ENCODE measurements at regions of chr9 and their contacts with region 1.

Region 1: GRCh38 chr9:75866273-75866871 is 24.1 kb upstream of the PCSK5 start:
- DNase-seq: peak in 3 of 10 donors; percentile 10 to 50 (median 14)

Region 2: GRCh38 chr9:75200892-75201470 is 665.4 kb before region 1 on chr9:
- intact Hi-C with region 1: loop called (anchors 10 kb)
- DNase-seq: no peak

Region 3: DNA sequence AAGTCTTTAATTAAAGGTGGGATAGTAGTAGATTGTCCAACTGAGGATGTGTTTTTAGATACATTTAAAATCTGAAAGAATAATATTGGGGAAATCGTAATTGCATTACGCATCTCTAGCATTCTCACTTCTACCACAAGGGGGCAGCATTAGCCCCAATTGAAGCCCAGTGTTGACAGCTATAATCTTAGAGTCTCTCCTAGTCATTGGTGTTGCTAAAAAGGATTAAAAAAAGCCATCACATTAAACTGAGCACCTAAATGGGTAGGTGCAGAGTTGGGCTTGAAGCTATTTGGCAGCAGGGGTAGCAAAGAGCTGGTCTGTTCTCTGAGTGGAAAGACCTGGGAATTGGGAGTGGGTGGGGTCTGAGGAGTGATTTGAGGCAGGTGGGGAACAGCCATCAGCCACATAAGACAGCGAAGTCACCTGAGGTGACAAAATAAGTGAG is 600.8 kb before region 1 on chr9:
- intact Hi-C with region 1: loop called (anchors 5 kb)
- DNase-seq: peak in 5 of 10 donors; percentile 12 to 49 (median 32)

Region 4: DNA sequence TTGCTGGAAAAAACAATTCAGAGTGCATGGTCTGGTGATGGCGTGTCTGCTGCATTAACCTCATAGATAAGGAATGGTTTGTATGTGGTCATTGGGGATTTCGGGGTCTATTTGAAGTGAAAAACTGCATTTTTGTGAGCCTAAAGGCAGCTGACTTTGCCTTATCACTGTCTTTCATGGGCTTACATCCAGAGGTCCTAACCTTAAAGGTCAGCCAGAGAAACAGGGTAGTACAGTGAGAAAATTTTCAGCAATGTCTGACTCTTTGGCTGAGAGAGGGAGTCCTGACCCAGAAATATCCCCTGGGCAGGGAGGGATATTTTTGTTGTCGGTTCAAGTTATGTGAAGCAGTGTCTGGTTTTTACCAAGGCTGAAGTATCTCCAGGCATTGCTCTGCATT is 29.8 kb after region 1 on chr9:
- intact Hi-C with region 1: loop called (anchors 5 kb)
- DNase-seq: no peak

Region 5: GRCh38 chr9:76297721-76298239 is 431.4 kb after region 1 on chr9:
- intact Hi-C with region 1: loop called (anchors 10 kb)
- DNase-seq: no peak

Region 6: DNA sequence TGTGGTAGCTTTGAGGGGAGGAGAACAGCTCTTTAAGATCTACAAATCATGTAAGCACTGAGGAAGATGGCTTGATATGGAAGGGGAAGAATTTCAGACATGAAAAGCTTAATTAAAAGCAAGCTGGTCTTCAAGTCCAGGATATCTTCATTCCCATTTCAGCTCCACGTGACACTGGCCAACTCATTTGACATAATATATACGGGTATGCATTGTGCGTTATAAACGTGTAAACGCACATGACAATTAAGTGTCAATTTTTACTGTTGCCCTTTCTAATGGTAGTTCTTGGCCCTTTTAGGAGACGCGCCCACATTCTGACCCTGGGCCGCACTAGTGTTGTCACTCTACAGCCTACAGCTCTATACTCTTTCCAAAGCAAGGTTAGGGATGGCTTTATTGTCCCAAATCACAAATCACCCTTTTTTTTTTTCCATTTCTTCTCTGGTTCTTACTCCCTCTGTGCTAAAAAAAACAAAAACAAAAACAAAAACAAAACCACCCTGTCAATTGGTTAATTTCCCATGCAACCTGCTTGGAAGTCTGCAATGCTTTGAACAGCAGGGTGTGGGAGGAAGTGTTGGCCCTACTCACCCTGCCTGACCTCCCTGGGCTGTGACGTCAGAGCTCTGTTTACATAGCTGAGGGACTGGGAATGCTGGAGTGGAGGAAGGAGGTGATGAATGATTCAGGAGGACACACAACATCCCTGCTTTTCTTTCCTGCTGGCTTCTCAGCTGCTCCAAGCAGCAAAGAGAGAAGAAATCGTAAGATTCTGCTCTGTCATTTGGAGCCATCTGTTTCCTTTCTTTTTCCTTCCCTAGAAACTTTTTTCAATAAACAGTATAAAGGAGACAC is 508.6 kb after region 1 on chr9:
- intact Hi-C with region 1: no loop called
- DNase-seq: no peak

Measured in posterior cingulate gyrus (tissue), 11 donors.